Activated CD4-positive, alpha-beta T cell treated with anti-CD3 and anti-CD28 coated beads for 36 hours (primary cell): ENCODE measurements at regions of chr12 and their contacts with region 1.

Region 1: DNA sequence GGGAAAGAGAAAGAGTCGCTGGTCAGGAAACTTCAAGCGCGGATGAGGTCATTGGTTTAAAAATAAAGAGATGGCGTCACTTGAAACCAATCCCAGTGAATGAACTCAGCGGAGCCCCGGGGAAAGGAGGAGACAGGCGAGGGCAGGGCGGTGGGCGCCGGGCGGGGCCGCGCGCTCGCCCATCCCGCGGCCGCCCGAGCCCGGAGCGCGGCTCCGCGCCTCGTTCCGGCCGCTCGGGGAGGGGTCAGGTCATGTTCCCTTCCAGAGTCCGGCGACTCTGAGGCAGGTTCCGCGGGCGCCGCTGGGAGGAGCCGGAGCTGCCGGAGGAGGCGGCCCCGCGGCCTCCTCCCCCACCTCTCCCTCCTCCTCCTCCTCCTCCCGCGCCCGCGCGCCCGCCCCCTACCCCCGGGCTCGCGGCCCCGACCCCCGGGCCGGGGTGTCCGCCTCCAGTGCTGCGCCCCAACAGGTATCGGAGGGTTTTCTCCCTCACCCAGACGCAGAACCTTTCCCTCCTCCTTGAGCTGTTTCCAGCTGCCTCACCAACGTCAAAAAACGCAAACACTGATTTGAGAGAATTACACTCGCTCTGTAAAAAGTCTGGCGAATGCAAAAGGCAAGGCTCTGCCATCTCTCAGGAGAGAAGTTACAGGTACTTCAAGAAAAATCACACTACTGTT is at the start of gene DUSP16:
- DNase-seq: peak; percentile 82
- ATAC-seq: peak; percentile 76
- H3K4me3 Mint-ChIP-seq: peak within 1 kb of the TSS; percentile 84
- H3K27ac Mint-ChIP-seq: peak within 1 kb of the TSS; percentile 88
- H3K4me1 Mint-ChIP-seq: peaks cover 37% of the 10 kb centered on the region
- H3K27me3 Mint-ChIP-seq: no peaks in the 10 kb centered on the region
- total RNA-seq, gene DUSP16: 39.3 to 40.4 TPM

Region 2: GRCh38 chr12:12356886-12357718 is 205.6 kb before region 1 on chr12 and contains the start of gene BORCS5:
- CTCF ChIA-PET with region 1: interaction called, 3 read pairs
- POLR2A ChIA-PET with region 1: no interaction called
- intact Hi-C with region 1: loop called (anchors 1 to 2 kb)
- DNase-seq: peak; percentile 99
- ATAC-seq: peak; percentile 94
- H3K4me3 Mint-ChIP-seq: peak within 1 kb of the TSS; percentile 98
- H3K27ac Mint-ChIP-seq: peak within 1 kb of the TSS; percentile 99
- H3K4me1 Mint-ChIP-seq: peaks cover 38% of the 10 kb centered on the region
- H3K27me3 Mint-ChIP-seq: no peaks in the 10 kb centered on the region
- total RNA-seq, gene BORCS5: 41.8 to 45.0 TPM

Region 3: DNA sequence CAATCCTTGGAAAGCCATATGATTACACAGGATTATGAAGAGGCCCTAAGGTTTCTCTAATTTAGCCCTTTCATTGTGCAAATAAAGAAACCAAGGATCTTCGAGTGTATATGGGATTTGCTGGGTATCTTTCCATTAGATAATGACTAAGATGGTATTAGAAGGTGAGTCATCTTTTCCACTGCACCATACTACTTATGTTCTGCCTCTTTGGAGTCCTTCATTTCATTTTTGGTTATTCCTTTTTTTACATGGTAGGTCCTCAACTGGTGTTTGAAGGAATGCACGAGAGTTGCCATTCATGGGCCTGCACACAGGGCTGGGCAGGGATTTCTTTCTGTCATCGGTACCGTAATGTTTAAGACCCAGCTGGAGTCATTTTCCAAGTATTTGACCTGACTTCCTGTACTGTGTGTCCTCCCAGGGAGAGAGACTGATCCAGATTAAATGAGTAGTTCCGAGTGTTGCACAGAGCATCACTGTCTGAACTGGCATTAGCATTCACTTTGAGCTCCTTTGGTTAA is 120.1 kb before region 1 on chr12:
- CTCF ChIA-PET with region 1: interaction called, 5 read pairs
- POLR2A ChIA-PET with region 1: interaction called, 6 read pairs
- intact Hi-C with region 1: loop called (anchors 2 to 5 kb)
- DNase-seq: no peak
- ATAC-seq: peak; percentile 16
- H3K4me3 Mint-ChIP-seq: peak overlapping the region; percentile 46
- H3K27ac Mint-ChIP-seq: peak overlapping the region; percentile 98
- H3K4me1 Mint-ChIP-seq: peaks cover 81% of the 10 kb centered on the region
- H3K27me3 Mint-ChIP-seq: no peaks in the 10 kb centered on the region

Region 4: GRCh38 chr12:12474931-12475795 is 87.6 kb before region 1 on chr12:
- CTCF ChIA-PET with region 1: interaction called, 13 read pairs
- POLR2A ChIA-PET with region 1: no interaction called
- intact Hi-C with region 1: loop called (anchors 2 kb)
- DNase-seq: peak; percentile 78
- ATAC-seq: peak; percentile 87
- H3K4me3 Mint-ChIP-seq: peak overlapping the region; percentile 59
- H3K27ac Mint-ChIP-seq: peak overlapping the region; percentile 97
- H3K4me1 Mint-ChIP-seq: peaks cover 81% of the 10 kb centered on the region
- H3K27me3 Mint-ChIP-seq: no peaks in the 10 kb centered on the region

Region 5: DNA sequence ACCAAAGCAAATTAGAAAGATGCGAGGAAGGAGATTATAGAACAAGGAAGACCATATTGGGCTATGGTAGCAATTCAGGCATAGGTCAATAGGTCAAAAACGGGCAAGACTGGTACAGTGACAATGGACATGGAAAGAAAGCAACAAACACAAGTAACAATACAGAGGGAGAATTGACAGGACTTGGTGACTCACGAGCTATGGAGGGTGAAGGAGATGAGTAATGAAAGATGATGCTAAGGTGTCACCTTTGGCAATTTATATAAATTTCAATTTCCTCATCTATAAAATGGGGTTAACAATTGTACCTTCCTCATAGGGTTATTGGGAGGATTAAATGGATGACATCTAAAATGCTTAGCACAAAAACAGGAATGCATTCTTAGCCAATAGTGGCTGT is 15.1 kb after region 1 on chr12:
- CTCF ChIA-PET with region 1: interaction called, 11 read pairs
- POLR2A ChIA-PET with region 1: interaction called, 3 read pairs
- intact Hi-C with region 1: loop called (anchors 1 to 2 kb)
- DNase-seq: no peak
- ATAC-seq: peak; percentile 30
- H3K4me3 Mint-ChIP-seq: no peak overlapping the region
- H3K27ac Mint-ChIP-seq: no peak overlapping the region
- H3K4me1 Mint-ChIP-seq: peaks cover 15% of the 10 kb centered on the region
- H3K27me3 Mint-ChIP-seq: no peaks in the 10 kb centered on the region

Region 6: GRCh38 chr12:12611512-12612306 is 49.0 kb after region 1 on chr12 and contains the start of gene CREBL2:
- CTCF ChIA-PET with region 1: interaction called, 5 read pairs
- POLR2A ChIA-PET with region 1: interaction called, 5 read pairs
- intact Hi-C with region 1: loop called (anchors 1 kb)
- DNase-seq: peak; percentile 92
- ATAC-seq: peak; percentile 77
- H3K4me3 Mint-ChIP-seq: peak within 1 kb of the TSS; percentile 93
- H3K27ac Mint-ChIP-seq: peak within 1 kb of the TSS; percentile 98
- H3K4me1 Mint-ChIP-seq: peaks cover 68% of the 10 kb centered on the region
- H3K27me3 Mint-ChIP-seq: no peaks in the 10 kb centered on the region
- total RNA-seq, gene CREBL2: 16.8 to 20.2 TPM

Region 7: GRCh38 chr12:12716793-12717585 is 154.3 kb after region 1 on chr12 and contains the start of gene CDKN1B:
- CTCF ChIA-PET with region 1: interaction called, 3 read pairs
- POLR2A ChIA-PET with region 1: interaction called, 3 read pairs
- intact Hi-C with region 1: loop called (anchors 2 to 5 kb)
- DNase-seq: peak; percentile 93
- ATAC-seq: peak; percentile 69
- H3K4me3 Mint-ChIP-seq: peak within 1 kb of the TSS; percentile 93
- H3K27ac Mint-ChIP-seq: peak within 1 kb of the TSS; percentile 98
- H3K4me1 Mint-ChIP-seq: peaks cover 53% of the 10 kb centered on the region
- H3K27me3 Mint-ChIP-seq: no peaks in the 10 kb centered on the region
- total RNA-seq, gene CDKN1B: 34.2 to 37.0 TPM